GM10248 (cell line): ENCODE measurements at regions of chr7 and their contacts with region 1.

Region 1: GRCh38 chr7:137774793-137775201 is 72.0 kb downstream of the DGKI start:
- DNase-seq: no peak
- CTCF ChIP-seq: no peak

Region 2: DNA sequence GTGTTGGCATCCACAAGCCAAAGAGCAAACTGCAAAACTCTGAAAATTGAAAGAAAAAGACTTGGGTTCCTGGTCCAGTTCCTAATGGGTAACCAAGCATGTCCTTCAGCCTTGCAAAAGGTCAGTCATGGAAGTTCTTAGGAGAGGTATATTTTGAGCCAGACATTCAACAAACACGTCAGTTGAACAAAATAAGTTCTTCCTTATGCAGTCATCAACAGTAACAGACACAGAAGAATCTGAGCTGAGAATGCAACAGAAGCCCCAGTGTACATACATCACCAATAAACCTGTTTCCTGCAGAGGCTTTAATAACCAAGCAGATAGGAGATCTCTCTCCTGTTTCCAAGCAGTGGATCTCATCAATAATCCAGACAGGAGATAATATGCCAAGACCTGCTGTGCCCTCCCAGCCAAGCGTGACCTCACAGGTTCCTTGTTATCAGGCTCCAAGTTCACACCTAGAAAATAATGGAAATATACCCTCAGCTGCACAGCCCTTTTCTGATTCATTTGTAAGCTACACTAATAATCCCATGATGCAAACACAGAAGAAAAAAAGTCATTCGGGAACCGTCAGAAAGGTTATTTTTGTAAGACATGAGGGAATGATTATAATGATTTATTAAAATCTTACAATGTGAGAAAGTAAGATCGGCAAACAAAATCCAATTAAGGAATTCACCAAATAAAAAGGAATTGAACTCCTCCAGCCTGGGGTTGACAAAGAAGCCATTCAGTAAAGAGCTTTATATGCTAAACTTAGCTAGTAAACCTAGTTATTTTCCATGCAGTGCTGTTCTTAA is 18.7 kb before region 1 on chr7:
- CTCF ChIA-PET with region 1: no interaction called
- POLR2A ChIA-PET with region 1: no interaction called
- DNase-seq: no peak
- CTCF ChIP-seq: no peak

Region 3: DNA sequence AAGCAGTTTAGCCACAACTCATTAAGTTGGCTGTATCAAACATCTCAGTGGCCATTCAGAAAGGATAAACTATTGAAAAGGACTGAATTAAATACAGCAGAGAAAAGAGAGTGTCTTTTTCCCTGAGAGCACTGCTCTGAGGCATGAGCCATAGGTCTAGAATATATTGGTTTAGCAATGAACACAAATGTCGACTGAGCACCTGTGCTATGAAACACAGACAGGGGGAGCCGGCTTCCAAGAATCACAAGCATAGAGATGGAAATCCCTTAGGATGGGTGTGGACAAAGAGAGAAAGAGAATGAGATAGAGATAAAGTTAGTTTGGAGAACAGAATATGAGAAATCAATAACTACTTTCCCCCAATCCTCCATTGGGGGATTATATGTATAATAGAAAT is 17.1 kb after region 1 on chr7:
- CTCF ChIA-PET with region 1: interaction called, 13 read pairs
- POLR2A ChIA-PET with region 1: interaction called, 3 read pairs
- DNase-seq: no peak
- CTCF ChIP-seq: no peak